GM12878 (cell line): ENCODE measurements at regions of chr14 and their contacts with region 1.

Region 1: DNA sequence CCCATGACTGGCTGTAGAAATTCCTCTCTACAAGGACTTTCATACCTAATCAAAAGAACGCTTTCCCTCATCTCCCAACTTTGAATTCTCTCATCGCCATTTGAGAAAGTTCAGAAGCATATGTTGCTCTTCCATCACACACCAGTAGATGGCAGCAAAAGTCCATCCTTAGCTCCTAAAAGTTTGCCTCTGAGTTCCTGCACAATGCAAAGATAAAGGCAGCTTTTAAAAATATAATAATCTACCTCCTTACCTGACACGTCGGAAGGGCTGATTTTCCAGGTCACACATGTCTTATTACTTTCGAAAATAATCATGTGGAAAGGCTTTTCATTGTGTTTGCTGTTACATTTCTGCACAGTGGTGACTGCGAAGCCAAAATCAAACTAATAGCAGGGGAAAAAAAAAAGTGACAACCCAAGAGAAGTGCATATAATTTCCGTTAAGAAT is 456.7 kb upstream of the SEL1L start:
- DNase-seq: peak; percentile 16
- ATAC-seq: peak; percentile 69
- H3K4me3 ChIP-seq: no peak overlapping the region
- H3K27ac ChIP-seq: no peak overlapping the region
- H3K4me1 ChIP-seq: no peaks in the 10 kb centered on the region
- H3K27me3 ChIP-seq: no peaks in the 10 kb centered on the region
- CTCF ChIP-seq: peak; percentile 78 to 85 (median 81)
- EP300 ChIP-seq: no peak
- POLR2A ChIP-seq: no peak
- RAD21 ChIP-seq: peak; percentile 95

Region 2: GRCh38 chr14:81565441-81566290 is 424.7 kb before region 1 on chr14:
- CTCF ChIA-PET with region 1: interaction called, 8 read pairs
- POLR2A ChIA-PET with region 1: no interaction called
- RAD21 ChIA-PET with region 1: no interaction called
- SMC1A ChIA-PET with region 1: interaction called, 10 read pairs
- in situ Hi-C with region 1: no loop called
- intact Hi-C with region 1: loop called (anchors 1 kb)
- DNase-seq: no peak
- ATAC-seq: peak; percentile 81
- H3K4me3 ChIP-seq: no peak overlapping the region
- H3K27ac ChIP-seq: no peak overlapping the region
- H3K4me1 ChIP-seq: no peaks in the 10 kb centered on the region
- H3K27me3 ChIP-seq: peaks cover 0 to 2% of the 10 kb centered on the region in 2 experiments; a peak in 2 of 4 replicates
- CTCF ChIP-seq: peak; percentile 64 to 71 (median 70); a peak in 5 of 6 replicates
- EP300 ChIP-seq: no peak
- POLR2A ChIP-seq: no peak
- RAD21 ChIP-seq: peak; percentile 79

Region 3: DNA sequence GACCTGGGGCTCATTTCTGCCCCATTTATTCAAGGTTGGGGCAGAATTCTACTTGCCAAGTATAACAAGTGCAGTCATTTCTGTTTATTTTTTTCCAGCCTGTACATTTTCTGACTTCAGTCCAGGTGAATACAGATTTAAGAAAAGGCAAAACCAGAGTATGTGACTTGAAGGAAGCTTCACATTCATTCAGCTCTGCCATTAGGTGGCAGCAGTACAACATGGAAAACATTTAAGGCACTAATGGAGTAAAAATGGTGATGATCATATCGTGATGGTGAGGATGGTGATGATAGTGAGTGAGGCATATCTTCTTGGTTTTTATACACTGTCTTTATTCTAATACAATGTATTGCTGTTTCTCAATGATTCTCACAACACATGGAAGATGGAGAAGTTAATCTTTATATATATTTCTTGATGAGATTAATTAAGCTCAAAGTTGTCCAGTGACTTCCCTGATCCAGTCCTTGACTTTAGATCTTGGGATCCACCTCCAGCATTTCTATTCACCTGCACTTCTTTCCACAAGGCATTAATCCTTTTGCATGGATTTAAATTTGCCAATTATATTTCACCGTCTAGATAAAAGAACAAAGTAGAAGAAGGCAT is 280.0 kb before region 1 on chr14:
- CTCF ChIA-PET with region 1: interaction called, 16 read pairs
- POLR2A ChIA-PET with region 1: no interaction called
- RAD21 ChIA-PET with region 1: interaction called, 6 read pairs
- SMC1A ChIA-PET with region 1: interaction called, 3 read pairs
- in situ Hi-C with region 1: no loop called
- intact Hi-C with region 1: loop called (anchors 2 kb)
- DNase-seq: peak; percentile 0
- ATAC-seq: peak; percentile 61
- H3K4me3 ChIP-seq: no peak overlapping the region
- H3K27ac ChIP-seq: no peak overlapping the region
- H3K4me1 ChIP-seq: no peaks in the 10 kb centered on the region
- H3K27me3 ChIP-seq: no peaks in the 10 kb centered on the region
- CTCF ChIP-seq: peak; percentile 49 to 69 (median 58); a peak in 5 of 6 replicates
- EP300 ChIP-seq: no peak
- POLR2A ChIP-seq: no peak
- RAD21 ChIP-seq: peak; percentile 72

Region 4: DNA sequence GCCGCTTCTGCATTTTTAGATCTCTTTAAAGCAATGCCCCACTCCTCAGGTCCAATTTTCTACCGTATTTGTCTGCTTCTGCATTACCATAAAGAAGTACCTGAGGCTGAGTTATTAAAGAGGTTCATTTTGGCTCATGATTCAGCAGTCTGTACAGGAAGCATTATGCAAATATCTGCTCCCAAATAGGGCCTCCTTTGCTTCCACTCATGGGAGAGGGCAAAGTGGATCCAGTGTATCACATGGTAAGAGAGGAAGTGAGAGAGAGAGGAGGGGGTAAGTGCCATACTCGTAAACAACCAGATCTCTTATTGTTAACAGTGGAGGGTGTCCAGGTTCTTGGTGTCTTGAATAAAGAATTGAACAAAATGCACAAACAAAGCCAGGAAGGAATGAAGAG is 140.6 kb before region 1 on chr14:
- CTCF ChIA-PET with region 1: no interaction called
- POLR2A ChIA-PET with region 1: no interaction called
- RAD21 ChIA-PET with region 1: no interaction called
- SMC1A ChIA-PET with region 1: no interaction called
- in situ Hi-C with region 1: no loop called
- intact Hi-C with region 1: no loop called
- DNase-seq: no peak
- ATAC-seq: no peak
- H3K4me3 ChIP-seq: no peak overlapping the region
- H3K27ac ChIP-seq: no peak overlapping the region
- H3K4me1 ChIP-seq: no peaks in the 10 kb centered on the region
- H3K27me3 ChIP-seq: no peaks in the 10 kb centered on the region
- CTCF ChIP-seq: no peak
- EP300 ChIP-seq: no peak
- POLR2A ChIP-seq: no peak
- RAD21 ChIP-seq: no peak

Region 5: GRCh38 chr14:81946834-81947798 is 43.2 kb before region 1 on chr14:
- CTCF ChIA-PET with region 1: no interaction called
- POLR2A ChIA-PET with region 1: no interaction called
- RAD21 ChIA-PET with region 1: no interaction called
- SMC1A ChIA-PET with region 1: no interaction called
- in situ Hi-C with region 1: no loop called
- intact Hi-C with region 1: no loop called
- DNase-seq: no peak
- ATAC-seq: no peak
- H3K4me3 ChIP-seq: no peak overlapping the region
- H3K27ac ChIP-seq: no peak overlapping the region
- H3K4me1 ChIP-seq: no peaks in the 10 kb centered on the region
- H3K27me3 ChIP-seq: no peaks in the 10 kb centered on the region
- CTCF ChIP-seq: no peak
- EP300 ChIP-seq: no peak
- POLR2A ChIP-seq: no peak
- RAD21 ChIP-seq: no peak

Region 6: DNA sequence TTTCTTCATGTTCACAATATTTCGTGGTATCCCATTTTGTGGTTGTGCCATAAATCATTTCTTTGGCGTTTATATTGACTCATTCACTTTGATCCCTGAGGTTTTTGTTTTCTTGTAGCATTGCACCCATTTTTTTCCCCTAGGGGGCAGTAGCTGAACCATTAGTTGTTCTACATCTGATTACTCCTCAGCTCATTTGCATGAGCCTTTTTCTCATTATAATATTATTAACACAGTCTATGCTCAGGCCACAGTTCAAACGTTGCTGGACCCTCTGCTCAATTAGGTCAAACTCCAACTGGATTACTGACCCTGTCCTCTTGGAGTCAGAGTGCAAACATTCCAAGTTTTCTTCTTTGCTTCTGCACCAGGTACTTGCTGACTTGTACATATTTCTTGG is 18.7 kb after region 1 on chr14:
- CTCF ChIA-PET with region 1: interaction called, 12 read pairs
- POLR2A ChIA-PET with region 1: no interaction called
- RAD21 ChIA-PET with region 1: no interaction called
- SMC1A ChIA-PET with region 1: no interaction called
- in situ Hi-C with region 1: no loop called
- intact Hi-C with region 1: no loop called
- DNase-seq: no peak
- ATAC-seq: peak; percentile 59
- H3K4me3 ChIP-seq: no peak overlapping the region
- H3K27ac ChIP-seq: no peak overlapping the region
- H3K4me1 ChIP-seq: no peaks in the 10 kb centered on the region
- H3K27me3 ChIP-seq: no peaks in the 10 kb centered on the region
- CTCF ChIP-seq: peak; percentile 17 to 25 (median 19); a peak in 2 of 6 replicates
- EP300 ChIP-seq: no peak
- POLR2A ChIP-seq: no peak
- RAD21 ChIP-seq: peak; percentile 37; the same call in 1 of the 2 replicates

Region 7: DNA sequence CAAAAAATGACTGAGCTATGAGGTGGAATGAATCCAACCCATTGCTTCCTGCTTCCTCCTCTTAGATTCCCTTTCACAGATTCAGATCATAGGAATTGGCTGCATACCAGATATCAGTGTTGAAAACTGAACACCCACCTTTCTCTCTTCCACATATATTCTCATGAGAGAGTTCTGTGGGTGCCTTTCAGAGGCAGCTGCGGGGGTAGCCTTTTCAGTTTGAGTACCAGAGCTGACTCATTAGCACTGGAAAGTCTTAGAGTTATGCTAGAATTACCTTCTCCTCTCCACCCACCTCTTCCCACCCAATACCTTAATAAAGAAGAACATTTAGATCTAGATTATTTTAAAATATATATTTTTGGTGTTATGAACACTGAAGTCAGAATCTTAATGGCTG is 38.7 kb after region 1 on chr14:
- CTCF ChIA-PET with region 1: no interaction called
- POLR2A ChIA-PET with region 1: no interaction called
- RAD21 ChIA-PET with region 1: no interaction called
- SMC1A ChIA-PET with region 1: no interaction called
- in situ Hi-C with region 1: no loop called
- intact Hi-C with region 1: no loop called
- DNase-seq: no peak
- ATAC-seq: peak; percentile 59
- H3K4me3 ChIP-seq: no peak overlapping the region
- H3K27ac ChIP-seq: no peak overlapping the region
- H3K4me1 ChIP-seq: no peaks in the 10 kb centered on the region
- H3K27me3 ChIP-seq: no peaks in the 10 kb centered on the region
- CTCF ChIP-seq: no peak
- EP300 ChIP-seq: no peak
- POLR2A ChIP-seq: no peak
- RAD21 ChIP-seq: no peak

Region 8: GRCh38 chr14:82075566-82075965 is 85.2 kb after region 1 on chr14:
- CTCF ChIA-PET with region 1: no interaction called
- POLR2A ChIA-PET with region 1: no interaction called
- RAD21 ChIA-PET with region 1: no interaction called
- SMC1A ChIA-PET with region 1: no interaction called
- in situ Hi-C with region 1: no loop called
- intact Hi-C with region 1: no loop called
- DNase-seq: no peak
- ATAC-seq: peak; percentile 41; the same call in 1 of the 3 replicates
- H3K4me3 ChIP-seq: no peak overlapping the region
- H3K27ac ChIP-seq: no peak overlapping the region
- H3K4me1 ChIP-seq: no peaks in the 10 kb centered on the region
- H3K27me3 ChIP-seq: no peaks in the 10 kb centered on the region; a peak in 1 of 4 replicates
- CTCF ChIP-seq: no peak
- EP300 ChIP-seq: no peak
- POLR2A ChIP-seq: no peak
- RAD21 ChIP-seq: no peak

Region 9: GRCh38 chr14:82230748-82231147 is 240.4 kb after region 1 on chr14:
- CTCF ChIA-PET with region 1: no interaction called
- POLR2A ChIA-PET with region 1: no interaction called
- RAD21 ChIA-PET with region 1: no interaction called
- SMC1A ChIA-PET with region 1: interaction called, 3 read pairs
- in situ Hi-C with region 1: no loop called
- intact Hi-C with region 1: loop called (anchors 5 kb)
- DNase-seq: no peak
- ATAC-seq: no peak
- H3K4me3 ChIP-seq: no peak overlapping the region
- H3K27ac ChIP-seq: no peak overlapping the region
- H3K4me1 ChIP-seq: no peaks in the 10 kb centered on the region
- H3K27me3 ChIP-seq: no peaks in the 10 kb centered on the region
- CTCF ChIP-seq: no peak
- EP300 ChIP-seq: no peak
- POLR2A ChIP-seq: no peak
- RAD21 ChIP-seq: no peak

Region 10: DNA sequence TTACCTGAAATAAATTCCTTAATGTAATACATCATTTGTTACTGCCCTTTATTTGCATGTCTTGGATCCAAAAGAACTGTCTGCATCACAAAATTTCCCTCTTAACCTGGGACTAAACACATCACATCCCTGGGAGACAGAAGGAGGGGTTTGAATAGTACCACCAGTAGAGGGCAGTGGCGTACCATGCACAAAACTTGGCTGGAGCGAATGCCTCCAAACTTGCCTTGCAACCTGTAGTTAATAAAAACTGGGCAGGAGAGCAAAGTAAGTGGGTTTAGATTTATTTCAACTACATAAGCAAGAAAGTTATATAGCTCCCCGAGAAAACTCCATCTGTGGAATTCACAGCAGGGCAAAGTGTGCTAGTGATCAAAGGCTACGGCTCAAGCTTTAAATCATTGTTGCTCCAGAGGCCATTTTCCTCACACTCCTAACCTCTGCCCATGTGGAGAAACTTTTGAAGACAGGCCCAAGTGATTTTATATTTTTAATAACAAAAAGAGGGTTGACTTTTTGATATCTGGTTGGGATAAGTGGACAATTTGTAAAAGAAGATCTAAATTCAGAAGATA is 720.0 kb after region 1 on chr14:
- CTCF ChIA-PET with region 1: interaction called, 4 read pairs
- POLR2A ChIA-PET with region 1: no interaction called
- RAD21 ChIA-PET with region 1: no interaction called
- SMC1A ChIA-PET with region 1: no interaction called
- in situ Hi-C with region 1: no loop called
- intact Hi-C with region 1: loop called (anchors 5 kb)
- DNase-seq: peak; percentile 8
- ATAC-seq: peak; percentile 87
- H3K4me3 ChIP-seq: no peak overlapping the region
- H3K27ac ChIP-seq: no peak overlapping the region
- H3K4me1 ChIP-seq: no peaks in the 10 kb centered on the region
- H3K27me3 ChIP-seq: no peaks in the 10 kb centered on the region
- CTCF ChIP-seq: peak; percentile 77 to 89 (median 81)
- EP300 ChIP-seq: no peak
- POLR2A ChIP-seq: no peak
- RAD21 ChIP-seq: peak; percentile 70

Region 11: DNA sequence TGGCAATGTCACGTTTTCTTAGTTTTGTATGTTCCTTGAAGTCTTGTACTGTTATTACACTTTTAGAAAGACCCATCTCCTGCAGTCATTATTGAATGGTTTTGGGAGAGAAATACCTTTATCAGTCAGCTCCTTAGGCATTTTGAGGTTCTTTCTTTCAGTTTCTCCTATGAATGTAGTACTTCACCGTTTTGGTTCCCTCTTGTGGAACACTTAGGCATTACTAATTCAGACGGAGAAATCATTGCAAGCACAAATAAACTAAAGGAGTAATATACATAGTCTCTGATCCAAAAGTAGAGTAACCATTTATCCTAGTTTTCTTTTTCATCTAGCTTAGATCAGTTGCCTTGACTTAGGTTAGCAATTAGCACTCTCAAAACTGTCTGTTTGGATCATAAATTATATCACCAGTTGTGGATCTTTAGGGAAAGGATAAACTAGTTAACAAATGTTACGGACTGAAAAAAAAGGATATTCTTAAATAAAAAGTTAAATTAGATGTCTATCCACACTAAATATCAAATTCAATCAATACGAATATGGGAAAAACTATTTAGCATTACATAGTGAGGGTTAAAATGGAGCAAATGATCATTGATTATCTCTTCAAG is 1081.7 kb after region 1 on chr14:
- CTCF ChIA-PET with region 1: interaction called, 17 read pairs
- POLR2A ChIA-PET with region 1: no interaction called
- RAD21 ChIA-PET with region 1: interaction called, 4 read pairs
- SMC1A ChIA-PET with region 1: interaction called, 5 read pairs
- in situ Hi-C with region 1: loop called (anchors 25 kb)
- intact Hi-C with region 1: loop called (anchors 2 kb)
- DNase-seq: peak; percentile 11
- ATAC-seq: peak; percentile 82
- H3K4me3 ChIP-seq: no peak overlapping the region
- H3K27ac ChIP-seq: no peak overlapping the region
- H3K4me1 ChIP-seq: no peaks in the 10 kb centered on the region
- H3K27me3 ChIP-seq: no peaks in the 10 kb centered on the region
- CTCF ChIP-seq: peak; percentile 38 to 54 (median 47); a peak in 4 of 6 replicates
- EP300 ChIP-seq: no peak
- POLR2A ChIP-seq: no peak
- RAD21 ChIP-seq: peak; percentile 46